ENCODE measurements at regions of chr5 and their contacts with region 1.

Region 1: GRCh38 chr5:73448463-73449136 is at the start of gene FOXD1:
- DNase-seq: peak; percentile 66
- H3K4me3 ChIP-seq: peak within 1 kb of the TSS in 1 of 3 experiments; percentile 38
- H3K27ac ChIP-seq: no peak within 1 kb of the TSS
- H3K4me1 ChIP-seq: peaks cover 7% of the 10 kb centered on the region
- H3K27me3 ChIP-seq: peaks cover 68 to 88% of the 10 kb centered on the region in 2 experiments
- CTCF ChIP-seq: no peak
- POLR2A ChIP-seq: no peak
- total RNA-seq, gene FOXD1: 0.14 and 0.20 TPM in 2 replicates

Region 2: GRCh38 chr5:73201547-73202513 is 246.8 kb before region 1 on chr5:
- CTCF ChIA-PET with region 1: interaction called, 11 read pairs
- POLR2A ChIA-PET with region 1: no interaction called
- dilution Hi-C with region 1: no loop called
- intact Hi-C with region 1: no loop called
- DNase-seq: peak; percentile 60
- H3K4me3 ChIP-seq: no peak overlapping the region
- H3K27ac ChIP-seq: no peak overlapping the region
- H3K4me1 ChIP-seq: no peaks in the 10 kb centered on the region
- H3K27me3 ChIP-seq: peaks cover 29 to 30% of the 10 kb centered on the region in 2 experiments
- CTCF ChIP-seq: peak; percentile 78 to 91
- POLR2A ChIP-seq: no peak

Region 3: DNA sequence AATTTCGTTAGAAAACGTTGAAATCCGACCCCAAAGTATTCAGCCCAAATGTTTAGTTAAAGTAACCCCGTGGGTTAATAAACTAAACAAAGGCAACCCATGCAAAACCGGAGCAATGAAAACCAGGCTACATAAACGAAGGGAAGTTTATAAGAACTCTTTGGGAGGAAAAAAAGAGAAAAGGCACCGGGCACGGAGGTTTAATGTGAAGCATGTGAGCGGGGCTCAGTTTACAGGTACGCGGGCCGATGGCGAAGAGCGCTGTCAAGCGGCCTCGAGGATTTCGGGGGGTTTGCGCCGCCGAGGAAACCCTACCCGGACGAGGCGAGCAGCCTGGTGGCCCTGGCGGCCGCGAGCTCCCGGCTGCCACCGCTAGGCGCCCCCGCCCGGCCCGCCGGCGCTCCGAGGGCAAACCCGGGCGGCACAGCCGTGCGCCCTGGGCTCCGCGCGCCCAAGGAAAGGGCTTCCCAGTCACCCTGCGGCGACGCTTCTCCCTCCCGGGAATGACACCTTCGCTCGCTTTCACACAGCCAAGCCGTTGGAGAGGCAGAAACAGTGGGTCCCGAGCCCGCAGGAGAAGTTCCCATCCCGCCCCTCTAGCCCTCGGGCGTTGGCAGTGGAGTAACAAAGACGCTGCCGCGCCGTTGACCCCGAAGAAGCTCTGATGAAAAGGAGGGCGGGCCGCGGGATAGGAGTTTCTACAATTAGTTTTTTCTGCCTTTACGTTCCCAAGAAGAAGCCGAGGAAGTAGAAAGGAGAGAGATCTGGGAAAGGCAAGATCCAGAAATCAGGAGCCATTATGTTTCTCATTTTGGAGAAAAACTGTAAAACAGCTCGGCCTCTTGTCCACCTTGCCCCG is 149.6 kb before region 1 on chr5:
- CTCF ChIA-PET with region 1: interaction called, 16 read pairs
- POLR2A ChIA-PET with region 1: no interaction called
- dilution Hi-C with region 1: no loop called
- intact Hi-C with region 1: loop called (anchors 2 kb)
- DNase-seq: no peak
- H3K4me3 ChIP-seq: no peak overlapping the region
- H3K27ac ChIP-seq: no peak overlapping the region
- H3K4me1 ChIP-seq: no peaks in the 10 kb centered on the region
- H3K27me3 ChIP-seq: peaks cover 90 to 98% of the 10 kb centered on the region in 2 experiments
- CTCF ChIP-seq: peak; percentile 31 to 38
- POLR2A ChIP-seq: no peak

Region 4: GRCh38 chr5:73365301-73365853 is 83.2 kb before region 1 on chr5:
- CTCF ChIA-PET with region 1: interaction called, 13 read pairs
- POLR2A ChIA-PET with region 1: no interaction called
- dilution Hi-C with region 1: no loop called
- intact Hi-C with region 1: loop called (anchors 2 kb)
- DNase-seq: peak; percentile 70
- H3K4me3 ChIP-seq: no peak overlapping the region
- H3K27ac ChIP-seq: peak overlapping the region; percentile 40
- H3K4me1 ChIP-seq: peaks cover 25% of the 10 kb centered on the region
- H3K27me3 ChIP-seq: peaks cover 11 to 17% of the 10 kb centered on the region in 2 experiments
- CTCF ChIP-seq: no peak
- POLR2A ChIP-seq: no peak

Region 5: GRCh38 chr5:73433982-73434342 is 14.6 kb before region 1 on chr5:
- CTCF ChIA-PET with region 1: interaction called, 11 read pairs
- POLR2A ChIA-PET with region 1: no interaction called
- dilution Hi-C with region 1: no loop called
- intact Hi-C with region 1: no loop called
- DNase-seq: no peak
- H3K4me3 ChIP-seq: no peak overlapping the region
- H3K27ac ChIP-seq: no peak overlapping the region
- H3K4me1 ChIP-seq: peaks cover 6% of the 10 kb centered on the region
- H3K27me3 ChIP-seq: peaks cover 73 to 92% of the 10 kb centered on the region in 2 experiments
- CTCF ChIP-seq: no peak
- POLR2A ChIP-seq: no peak

Measured in endothelial cell of umbilical vein (primary cell).